ENCODE measurements at regions of chr22 and their contacts with region 1.

Region 1: DNA sequence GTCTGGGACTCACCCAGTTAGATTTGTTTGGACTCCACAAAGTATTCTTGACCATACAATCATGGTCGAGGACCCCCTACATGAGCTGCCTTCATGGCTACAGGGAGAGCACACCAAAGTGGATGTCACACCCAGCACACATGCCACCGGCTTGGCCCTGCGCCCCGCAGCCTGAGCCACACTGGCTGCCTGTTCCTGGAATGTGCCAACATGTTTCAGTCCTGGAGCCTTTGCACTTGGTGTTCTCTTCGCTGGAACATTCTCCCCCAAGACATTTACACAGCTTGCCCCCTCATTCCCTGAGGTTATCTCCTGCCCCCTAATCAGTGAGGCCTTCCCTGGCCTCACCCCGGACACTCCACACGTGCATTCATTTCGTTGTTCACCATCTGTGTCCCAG is 46.0 kb downstream of the PPARA start:
- DNase-seq: peak; percentile 59 to 83 (median 75)
- ATAC-seq: peak; percentile 92 to 96 (median 94)
- H3K4me3 ChIP-seq: no peak overlapping the region
- H3K27ac ChIP-seq: peak overlapping the region; percentile 47 to 89 (median 70)
- H3K4me1 ChIP-seq: peaks cover 0 to 51% (median 12%) of the 10 kb centered on the region in 12 donors
- H3K27me3 ChIP-seq: no peaks in the 10 kb centered on the region
- CTCF ChIP-seq: no peak
- POLR2A ChIP-seq: no peak

Region 2: DNA sequence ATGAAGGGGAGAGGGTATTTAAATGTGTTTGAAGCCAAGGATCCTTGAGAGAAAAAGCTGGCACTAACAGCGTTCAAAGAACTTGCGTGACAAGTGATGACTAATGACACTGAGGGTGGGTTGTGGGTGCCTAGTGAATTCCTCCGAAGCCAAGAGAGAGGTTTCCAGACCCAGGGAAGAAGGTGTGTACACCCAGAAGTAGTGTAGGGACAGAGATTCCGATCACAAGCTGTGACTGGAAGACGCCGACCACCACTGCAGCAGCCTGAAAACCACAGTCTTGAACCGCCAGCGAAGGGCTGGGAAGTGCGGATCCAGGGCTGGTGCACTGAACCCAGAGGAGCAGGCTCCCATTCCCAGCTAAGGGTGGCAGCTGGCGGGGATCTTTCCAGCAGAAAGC is 36.5 kb before region 1 on chr22:
- intact Hi-C with region 1: loop called in 2 of 10 experiments (anchors 5 kb)
- DNase-seq: no peak
- ATAC-seq: no peak
- H3K4me3 ChIP-seq: no peak overlapping the region
- H3K27ac ChIP-seq: no peak overlapping the region
- H3K4me1 ChIP-seq: peaks cover 0 to 32% (median 5%) of the 10 kb centered on the region in 12 donors
- H3K27me3 ChIP-seq: no peaks in the 10 kb centered on the region
- CTCF ChIP-seq: no peak
- POLR2A ChIP-seq: no peak

Region 3: DNA sequence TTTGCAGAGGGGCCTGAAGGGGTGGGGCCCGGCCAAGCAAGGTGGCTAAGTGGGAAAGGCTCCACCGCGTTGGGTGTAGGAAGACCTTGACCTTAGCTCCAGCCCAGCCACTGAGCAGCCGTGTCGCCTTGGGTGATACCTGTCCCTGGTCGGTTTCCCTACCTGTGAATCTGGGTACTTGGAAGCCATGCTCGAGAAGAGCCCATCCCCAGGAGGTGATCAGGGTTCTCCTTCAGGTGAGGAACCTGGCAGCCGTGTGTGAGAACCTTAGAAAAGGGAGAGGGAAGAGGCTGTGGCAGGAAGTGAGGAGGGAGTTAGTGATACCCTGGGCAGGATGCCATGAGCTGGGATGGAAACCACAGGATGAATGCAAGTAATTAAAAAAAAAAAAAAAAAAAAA is 24.3 kb before region 1 on chr22:
- intact Hi-C with region 1: no loop called
- DNase-seq: peak in 1 of 5 donors; percentile 32
- ATAC-seq: peak in 2 of 4 donors; percentile 20 to 29
- H3K4me3 ChIP-seq: no peak overlapping the region
- H3K27ac ChIP-seq: peak overlapping the region in 7 of 12 donors; percentile 4 to 70 (median 50)
- H3K4me1 ChIP-seq: peaks cover 11 to 35% (median 22%) of the 10 kb centered on the region in 12 donors
- H3K27me3 ChIP-seq: no peaks in the 10 kb centered on the region
- CTCF ChIP-seq: no peak
- POLR2A ChIP-seq: no peak

Region 4: DNA sequence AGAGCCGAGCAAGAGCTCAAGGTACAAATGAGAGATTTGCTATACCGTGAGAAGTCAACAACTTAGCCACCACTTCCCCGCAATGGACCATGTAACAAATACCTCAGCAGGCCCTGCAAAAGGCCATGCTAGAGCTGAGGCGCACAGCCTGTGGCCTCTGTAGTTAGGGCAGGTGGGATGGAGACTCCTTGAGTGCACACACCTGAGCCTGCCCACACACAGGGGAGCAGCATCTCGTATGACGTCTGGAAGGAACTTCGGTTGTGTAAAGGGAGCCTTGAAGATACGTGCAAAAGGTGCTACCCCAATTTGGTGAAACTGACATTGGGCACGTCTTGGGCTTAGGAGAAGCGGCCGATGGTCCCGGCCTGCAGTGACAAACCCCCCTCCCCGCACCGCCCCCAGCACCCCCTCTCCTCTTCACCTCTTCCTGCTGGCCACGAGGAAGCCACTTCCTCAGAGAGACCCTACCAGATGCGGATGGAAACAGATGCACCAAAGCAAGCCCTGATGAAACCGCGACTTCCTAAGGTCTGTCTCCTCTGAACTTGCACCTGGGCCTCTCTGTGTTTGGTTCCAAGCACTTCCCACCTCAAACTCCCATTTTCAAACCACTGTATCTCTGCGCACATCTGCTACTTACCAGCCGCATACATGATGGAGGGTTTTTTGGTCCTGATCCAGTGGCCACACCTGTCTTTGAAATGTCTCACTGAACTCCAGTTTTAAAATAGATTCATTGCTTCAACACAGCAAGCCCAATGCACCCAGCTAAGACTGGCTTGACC is 43.2 kb after region 1 on chr22:
- intact Hi-C with region 1: loop called in 1 of 10 experiments (anchors 5 kb)
- DNase-seq: no peak
- ATAC-seq: no peak
- H3K4me3 ChIP-seq: no peak overlapping the region
- H3K27ac ChIP-seq: peak overlapping the region in 10 of 12 donors; percentile 2 to 91 (median 74)
- H3K4me1 ChIP-seq: peaks cover 0 to 58% (median 28%) of the 10 kb centered on the region in 12 donors
- H3K27me3 ChIP-seq: no peaks in the 10 kb centered on the region
- CTCF ChIP-seq: no peak
- POLR2A ChIP-seq: no peak